Mammary epithelial cell (primary cell): ENCODE measurements at regions of chr1 and their contacts with region 1.

Region 1: DNA sequence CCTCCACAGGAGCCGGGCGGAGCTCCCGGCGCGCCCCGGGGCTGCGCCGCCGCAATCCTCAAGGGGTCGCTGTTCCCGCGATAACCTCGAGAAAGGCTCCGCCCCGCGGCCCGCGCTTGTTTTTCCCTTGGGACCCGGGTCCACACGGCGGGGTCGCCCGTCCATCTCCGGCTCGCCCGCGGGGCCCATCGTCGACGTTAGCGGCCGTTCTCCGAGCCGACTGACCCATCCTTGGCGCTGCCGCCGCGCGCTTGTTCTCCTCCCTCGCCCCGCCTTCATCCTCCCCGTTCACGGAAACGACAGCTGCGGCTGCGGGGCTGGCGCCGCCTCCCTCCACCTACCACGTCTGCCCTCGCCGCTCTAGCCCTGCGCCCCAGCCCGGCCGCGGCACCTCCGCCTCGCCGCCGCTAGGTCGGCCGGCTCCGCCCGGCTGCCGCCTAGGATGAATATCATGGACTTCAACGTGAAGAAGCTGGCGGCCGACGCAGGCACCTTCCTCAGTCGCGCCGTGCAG is at the start of gene SH3GLB1:
- DNase-seq: peak; percentile 89
- H3K4me3 ChIP-seq: peak within 1 kb of the TSS; percentile 74 to 98 (median 95)
- H3K27ac ChIP-seq: peak within 1 kb of the TSS; percentile 79
- H3K4me1 ChIP-seq: peaks cover 20% of the 10 kb centered on the region
- H3K27me3 ChIP-seq: no peaks in the 10 kb centered on the region
- CTCF ChIP-seq: peak; percentile 63 to 85
- total RNA-seq, gene SH3GLB1: 41.8 to 93.9 TPM

Region 2: GRCh38 chr1:86395771-86396497 is 308.6 kb before region 1 on chr1 and contains the start of gene ODF2L:
- CTCF ChIA-PET with region 1: interaction called, 4 read pairs
- dilution Hi-C with region 1: no loop called
- in situ Hi-C with region 1: loop called in 1 of 2 experiments (anchors 25 kb)
- intact Hi-C with region 1: loop called (anchors 10 kb)
- DNase-seq: peak; percentile 85
- H3K4me3 ChIP-seq: peak within 1 kb of the TSS; percentile 51 to 67 (median 59)
- H3K27ac ChIP-seq: peak within 1 kb of the TSS; percentile 53
- H3K4me1 ChIP-seq: peaks cover 6% of the 10 kb centered on the region
- H3K27me3 ChIP-seq: no peaks in the 10 kb centered on the region
- CTCF ChIP-seq: no peak
- total RNA-seq, gene ODF2L: 43.0 to 55.2 TPM

Region 3: DNA sequence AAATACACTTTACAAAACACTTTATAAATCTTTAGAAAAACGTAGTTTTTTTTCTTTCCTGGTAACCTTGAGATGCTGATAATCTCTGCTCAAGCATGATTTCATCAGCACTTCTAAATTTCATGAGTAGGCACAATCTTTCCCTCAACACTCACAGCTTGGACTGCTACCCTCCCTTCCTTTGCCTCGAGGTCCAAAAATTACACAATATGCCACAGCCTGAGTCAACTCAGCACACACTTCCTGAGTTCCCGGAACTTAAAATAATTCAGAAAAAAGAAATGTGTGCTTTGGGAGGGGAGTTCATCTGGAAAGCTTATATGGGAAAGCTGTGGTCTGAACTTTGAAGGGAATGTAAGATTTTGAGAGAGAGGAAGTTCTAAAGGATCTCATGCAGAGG is 274.7 kb before region 1 on chr1:
- CTCF ChIA-PET with region 1: no interaction called
- dilution Hi-C with region 1: no loop called
- in situ Hi-C with region 1: no loop called
- intact Hi-C with region 1: no loop called
- DNase-seq: peak; percentile 89
- H3K4me3 ChIP-seq: no peak overlapping the region
- H3K27ac ChIP-seq: peak overlapping the region; percentile 81
- H3K4me1 ChIP-seq: peaks cover 36% of the 10 kb centered on the region
- H3K27me3 ChIP-seq: no peaks in the 10 kb centered on the region
- CTCF ChIP-seq: no peak

Region 4: GRCh38 chr1:86466986-86467385 is 237.5 kb before region 1 on chr1:
- CTCF ChIA-PET with region 1: no interaction called
- dilution Hi-C with region 1: no loop called
- in situ Hi-C with region 1: no loop called
- intact Hi-C with region 1: no loop called
- DNase-seq: peak; percentile 16
- H3K4me3 ChIP-seq: no peak overlapping the region
- H3K27ac ChIP-seq: no peak overlapping the region
- H3K4me1 ChIP-seq: no peaks in the 10 kb centered on the region
- H3K27me3 ChIP-seq: no peaks in the 10 kb centered on the region
- CTCF ChIP-seq: no peak

Region 5: GRCh38 chr1:86515597-86515996 is 188.9 kb before region 1 on chr1:
- CTCF ChIA-PET with region 1: interaction called, 5 read pairs
- dilution Hi-C with region 1: no loop called
- in situ Hi-C with region 1: loop called in 1 of 2 experiments (anchors 25 kb)
- intact Hi-C with region 1: loop called (anchors 5 kb)
- DNase-seq: peak; percentile 46
- H3K4me3 ChIP-seq: no peak overlapping the region
- H3K27ac ChIP-seq: no peak overlapping the region
- H3K4me1 ChIP-seq: peaks cover 21% of the 10 kb centered on the region
- H3K27me3 ChIP-seq: no peaks in the 10 kb centered on the region
- CTCF ChIP-seq: peak; percentile 46 to 83

Region 6: GRCh38 chr1:86741947-86742572 is 37.5 kb after region 1 on chr1:
- CTCF ChIA-PET with region 1: no interaction called
- dilution Hi-C with region 1: no loop called
- in situ Hi-C with region 1: no loop called
- intact Hi-C with region 1: loop called (anchors 5 kb)
- DNase-seq: peak; percentile 12
- H3K4me3 ChIP-seq: no peak overlapping the region
- H3K27ac ChIP-seq: no peak overlapping the region
- H3K4me1 ChIP-seq: no peaks in the 10 kb centered on the region
- H3K27me3 ChIP-seq: no peaks in the 10 kb centered on the region
- CTCF ChIP-seq: peak; percentile 56 to 65

Region 7: GRCh38 chr1:86965012-86965826 is 260.7 kb after region 1 on chr1:
- CTCF ChIA-PET with region 1: no interaction called
- dilution Hi-C with region 1: no loop called
- in situ Hi-C with region 1: no loop called
- intact Hi-C with region 1: loop called (anchors 2 kb)
- DNase-seq: peak; percentile 11
- H3K4me3 ChIP-seq: no peak overlapping the region
- H3K27ac ChIP-seq: no peak overlapping the region
- H3K4me1 ChIP-seq: no peaks in the 10 kb centered on the region
- H3K27me3 ChIP-seq: no peaks in the 10 kb centered on the region
- CTCF ChIP-seq: peak; percentile 65 to 70

Region 8: GRCh38 chr1:87226341-87226760 is 521.8 kb after region 1 on chr1:
- CTCF ChIA-PET with region 1: no interaction called
- dilution Hi-C with region 1: no loop called
- in situ Hi-C with region 1: no loop called
- intact Hi-C with region 1: no loop called
- DNase-seq: peak; percentile 99
- H3K4me3 ChIP-seq: no peak overlapping the region
- H3K27ac ChIP-seq: peak overlapping the region; percentile 77
- H3K4me1 ChIP-seq: peaks cover 27% of the 10 kb centered on the region
- H3K27me3 ChIP-seq: no peaks in the 10 kb centered on the region
- CTCF ChIP-seq: no peak